ENCODE measurements at regions of chr1 and their contacts with region 1.

Region 1: GRCh38 chr1:90850898-90851710 is 134.0 kb upstream of the BARHL2 start:
- DNase-seq: peak; percentile 70
- H3K4me3 Mint-ChIP-seq: peak overlapping the region; percentile 65
- H3K27ac Mint-ChIP-seq: no peak overlapping the region
- H3K4me1 Mint-ChIP-seq: no peaks in the 10 kb centered on the region
- H3K27me3 Mint-ChIP-seq: no peaks in the 10 kb centered on the region
- CTCF ChIP-seq: peak; percentile 70

Region 2: GRCh38 chr1:90621986-90622385 is 229.1 kb before region 1 on chr1:
- CTCF ChIA-PET with region 1: no interaction called
- POLR2A ChIA-PET with region 1: no interaction called
- intact Hi-C with region 1: no loop called
- DNase-seq: no peak
- H3K4me3 Mint-ChIP-seq: no peak overlapping the region
- H3K27ac Mint-ChIP-seq: no peak overlapping the region
- H3K4me1 Mint-ChIP-seq: no peaks in the 10 kb centered on the region
- H3K27me3 Mint-ChIP-seq: peaks cover 24% of the 10 kb centered on the region
- CTCF ChIP-seq: no peak

Region 3: DNA sequence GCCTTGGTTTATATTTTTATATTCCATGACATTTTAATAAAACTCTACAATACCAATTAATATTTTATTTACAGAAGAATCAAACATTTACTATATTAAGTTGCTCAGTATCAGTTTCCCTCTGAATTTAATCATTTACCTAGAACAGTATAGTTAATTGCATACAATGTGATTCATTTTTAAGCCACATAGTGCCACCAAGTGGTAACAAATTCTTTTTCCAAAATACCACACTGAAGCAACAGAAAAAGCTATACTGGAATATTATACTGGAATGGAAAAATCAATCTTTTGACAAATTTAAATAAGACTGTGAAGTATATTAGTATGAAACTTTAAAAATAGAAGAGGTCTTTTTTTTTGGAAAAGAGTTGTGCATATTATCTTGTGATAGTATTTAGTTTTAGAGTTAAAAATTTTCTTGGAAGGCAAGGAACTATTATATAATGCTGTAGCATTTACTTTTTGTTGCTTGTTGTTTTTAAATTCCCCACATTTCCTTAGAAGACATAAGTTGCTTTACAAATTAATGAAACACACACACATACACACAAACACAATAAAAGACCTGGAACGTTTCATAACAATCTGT is 113.4 kb after region 1 on chr1:
- CTCF ChIA-PET with region 1: interaction called, 4 read pairs
- POLR2A ChIA-PET with region 1: no interaction called
- intact Hi-C with region 1: loop called (anchors 5 kb)
- DNase-seq: peak; percentile 33
- H3K4me3 Mint-ChIP-seq: no peak overlapping the region
- H3K27ac Mint-ChIP-seq: no peak overlapping the region
- H3K4me1 Mint-ChIP-seq: peaks cover 33% of the 10 kb centered on the region
- H3K27me3 Mint-ChIP-seq: no peaks in the 10 kb centered on the region
- CTCF ChIP-seq: peak; percentile 49

Measured in MCF 10A (cell line).